ENCODE measurements at regions of chr10 and their contacts with region 1.

Region 1: DNA sequence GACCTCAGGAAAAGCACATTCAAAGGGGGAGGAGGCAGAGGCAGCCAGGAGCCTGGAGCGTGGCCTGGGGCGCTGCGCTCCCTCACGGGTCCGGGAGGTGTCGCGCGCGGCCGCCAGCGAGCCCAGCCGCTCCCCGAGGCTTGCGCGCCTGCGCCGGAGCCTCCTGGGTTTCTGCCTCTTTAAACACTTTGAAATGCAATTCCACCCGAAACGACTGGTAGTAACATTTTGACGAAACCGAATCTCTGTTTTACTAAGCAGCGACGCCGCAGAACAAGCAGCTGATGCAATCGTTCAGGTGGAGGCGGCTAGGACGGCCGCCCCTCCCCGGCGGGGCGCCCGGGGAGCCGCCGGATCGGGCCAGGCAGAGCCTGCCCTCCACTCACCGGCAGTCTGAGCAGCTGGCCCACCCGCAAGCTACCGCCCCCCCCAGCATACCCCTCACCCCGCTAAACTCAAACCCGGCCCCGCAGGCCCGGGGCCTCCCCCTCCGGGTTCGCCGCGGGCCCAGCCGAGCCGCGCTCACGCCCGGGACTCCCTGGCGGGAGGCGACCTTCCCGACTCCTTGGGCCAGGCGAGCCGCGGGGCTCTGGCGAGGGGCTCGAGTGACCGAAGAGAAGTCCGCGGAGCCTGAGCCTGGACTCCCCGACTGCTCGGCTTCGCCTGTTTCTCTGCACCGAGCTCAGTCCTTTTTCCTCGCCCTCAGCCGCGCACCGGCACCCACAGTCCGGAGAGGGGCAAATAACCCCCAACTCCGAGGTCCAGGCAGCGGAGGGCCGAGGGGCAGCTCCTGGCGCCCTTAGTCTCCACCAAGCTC is 3.2 kb downstream of the MKX start:
- DNase-seq: peak; percentile 66
- ATAC-seq: peak; percentile 91
- H3K4me3 Mint-ChIP-seq: peak overlapping the region; percentile 76
- H3K27ac Mint-ChIP-seq: no peak overlapping the region
- H3K4me1 Mint-ChIP-seq: peaks cover 24% of the 10 kb centered on the region
- H3K27me3 Mint-ChIP-seq: peaks cover 60% of the 10 kb centered on the region
- CTCF ChIP-seq: no peak

Region 2: DNA sequence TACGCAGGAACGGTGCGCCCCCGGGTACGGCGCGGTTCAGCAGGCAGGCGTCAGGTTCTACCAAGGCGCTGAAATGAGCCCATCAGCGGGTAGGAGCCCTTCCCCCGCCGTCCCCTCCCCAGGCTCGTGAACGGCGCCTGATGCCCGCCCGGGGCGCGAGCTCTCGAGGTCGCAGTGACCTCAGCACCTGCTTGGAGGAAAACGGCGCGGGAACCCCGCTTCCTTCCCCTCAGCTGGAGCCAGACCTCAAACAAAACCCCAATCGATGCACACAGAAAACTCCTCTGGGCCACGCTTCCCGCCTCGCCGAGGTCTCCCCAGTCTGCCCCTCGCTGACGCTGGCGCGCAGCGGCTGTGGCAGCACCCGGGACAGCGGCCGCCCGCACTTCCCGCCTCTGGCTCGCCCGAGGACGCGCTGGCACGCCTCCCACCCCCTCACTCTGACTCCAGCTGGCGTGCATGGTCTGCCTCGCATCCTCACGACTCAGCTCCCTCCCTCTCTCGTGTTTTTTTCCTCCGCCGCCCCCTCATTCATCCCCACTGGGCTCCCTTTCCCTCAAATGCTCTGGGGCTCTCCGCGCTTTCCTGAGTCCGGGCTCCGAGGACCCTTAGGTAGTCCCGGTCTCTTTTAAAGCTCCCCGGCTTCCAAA is 1526.3 kb before region 1 on chr10:
- CTCF ChIA-PET with region 1: no interaction called
- POLR2A ChIA-PET with region 1: no interaction called
- intact Hi-C with region 1: loop called (anchors 10 kb)
- DNase-seq: no peak
- ATAC-seq: peak; percentile 28
- H3K4me3 Mint-ChIP-seq: peak overlapping the region; percentile 55
- H3K27ac Mint-ChIP-seq: no peak overlapping the region
- H3K4me1 Mint-ChIP-seq: peaks cover 39% of the 10 kb centered on the region
- H3K27me3 Mint-ChIP-seq: peaks cover 71% of the 10 kb centered on the region
- CTCF ChIP-seq: no peak

Region 3: DNA sequence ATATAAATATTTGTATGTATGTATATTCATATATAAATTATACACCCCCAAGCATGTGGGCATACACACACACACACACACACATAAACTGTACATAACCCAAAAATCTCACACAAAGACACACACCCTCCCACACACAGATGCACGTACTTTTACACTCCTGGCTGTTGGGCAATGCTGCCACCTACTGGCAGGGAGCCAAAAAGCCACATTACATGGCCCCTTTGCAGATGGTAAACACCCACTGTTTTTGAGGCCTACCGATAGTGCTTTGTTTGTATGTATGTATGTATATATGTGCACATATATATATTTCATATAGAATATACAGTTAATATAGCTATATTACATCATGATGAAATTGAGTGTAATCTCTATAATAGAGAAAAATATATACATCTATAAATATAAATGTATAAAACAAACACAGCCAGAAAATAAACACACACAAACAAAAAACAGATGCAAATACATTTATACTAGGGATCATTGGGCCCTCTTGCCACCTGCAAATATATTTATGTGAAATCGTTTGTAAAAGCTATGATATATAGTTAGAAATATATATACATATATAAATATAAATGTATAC is 381.7 kb before region 1 on chr10:
- CTCF ChIA-PET with region 1: no interaction called
- POLR2A ChIA-PET with region 1: no interaction called
- intact Hi-C with region 1: loop called (anchors 10 kb)
- DNase-seq: peak; percentile 75
- ATAC-seq: peak; percentile 97
- H3K4me3 Mint-ChIP-seq: no peak overlapping the region
- H3K27ac Mint-ChIP-seq: no peak overlapping the region
- H3K4me1 Mint-ChIP-seq: peaks cover 8% of the 10 kb centered on the region
- H3K27me3 Mint-ChIP-seq: no peaks in the 10 kb centered on the region
- CTCF ChIP-seq: peak; percentile 99

Region 4: DNA sequence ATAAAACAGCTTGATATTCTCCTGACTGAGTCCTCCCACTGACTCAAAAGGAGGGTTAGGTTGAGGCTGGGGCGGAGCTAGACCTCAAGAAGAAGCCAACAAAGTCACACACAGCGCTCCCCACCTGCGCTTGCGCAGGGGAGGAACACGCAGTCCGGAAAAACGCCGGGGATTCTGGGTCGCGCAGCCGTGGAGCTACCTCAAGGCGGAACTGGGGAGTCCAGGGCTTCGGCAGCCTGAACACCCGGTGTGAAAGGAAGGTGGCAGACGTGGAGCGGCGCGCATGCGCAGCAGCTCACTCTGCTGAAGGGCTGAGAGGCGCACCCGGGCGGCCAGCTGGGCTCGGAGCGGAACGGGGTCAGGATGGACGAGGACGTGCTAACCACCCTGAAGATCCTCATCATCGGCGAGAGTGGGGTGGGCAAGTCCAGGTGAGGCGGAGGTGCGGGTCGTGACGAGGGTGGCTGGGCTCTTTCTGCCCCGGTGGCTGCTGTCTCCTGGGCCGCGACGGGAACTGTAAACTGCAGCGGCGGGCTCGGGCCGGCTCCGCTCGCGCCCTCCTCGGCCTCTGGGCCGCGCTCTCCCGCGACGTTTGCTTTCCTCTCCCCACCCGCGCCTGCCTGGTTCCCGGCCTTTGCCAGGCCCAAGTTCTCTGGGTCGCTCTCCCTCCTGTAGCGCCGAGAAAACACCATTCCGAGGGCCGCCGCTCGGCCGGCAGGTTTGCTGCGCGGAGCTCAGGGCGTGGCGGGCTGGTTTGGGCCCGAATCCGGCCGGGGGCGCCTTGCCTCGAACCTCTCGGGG is 238.2 kb before region 1 on chr10 and contains the start of gene RAB18:
- CTCF ChIA-PET with region 1: no interaction called
- POLR2A ChIA-PET with region 1: no interaction called
- intact Hi-C with region 1: loop called (anchors 2 kb)
- DNase-seq: peak; percentile 93
- ATAC-seq: peak; percentile 96
- H3K4me3 Mint-ChIP-seq: peak within 1 kb of the TSS; percentile 100
- H3K27ac Mint-ChIP-seq: peak within 1 kb of the TSS; percentile 99
- H3K4me1 Mint-ChIP-seq: peaks cover 41% of the 10 kb centered on the region
- H3K27me3 Mint-ChIP-seq: no peaks in the 10 kb centered on the region
- CTCF ChIP-seq: no peak
- total RNA-seq, gene RAB18: 48.3 and 55.6 TPM in 2 replicates

Region 5: GRCh38 chr10:28179006-28179742 is 436.8 kb after region 1 on chr10:
- CTCF ChIA-PET with region 1: interaction called, 10 read pairs
- POLR2A ChIA-PET with region 1: no interaction called
- intact Hi-C with region 1: loop called (anchors 1 kb)
- DNase-seq: no peak
- ATAC-seq: peak; percentile 64
- H3K4me3 Mint-ChIP-seq: no peak overlapping the region
- H3K27ac Mint-ChIP-seq: no peak overlapping the region
- H3K4me1 Mint-ChIP-seq: peaks cover 15% of the 10 kb centered on the region
- H3K27me3 Mint-ChIP-seq: no peaks in the 10 kb centered on the region
- CTCF ChIP-seq: peak; percentile 88

Region 6: DNA sequence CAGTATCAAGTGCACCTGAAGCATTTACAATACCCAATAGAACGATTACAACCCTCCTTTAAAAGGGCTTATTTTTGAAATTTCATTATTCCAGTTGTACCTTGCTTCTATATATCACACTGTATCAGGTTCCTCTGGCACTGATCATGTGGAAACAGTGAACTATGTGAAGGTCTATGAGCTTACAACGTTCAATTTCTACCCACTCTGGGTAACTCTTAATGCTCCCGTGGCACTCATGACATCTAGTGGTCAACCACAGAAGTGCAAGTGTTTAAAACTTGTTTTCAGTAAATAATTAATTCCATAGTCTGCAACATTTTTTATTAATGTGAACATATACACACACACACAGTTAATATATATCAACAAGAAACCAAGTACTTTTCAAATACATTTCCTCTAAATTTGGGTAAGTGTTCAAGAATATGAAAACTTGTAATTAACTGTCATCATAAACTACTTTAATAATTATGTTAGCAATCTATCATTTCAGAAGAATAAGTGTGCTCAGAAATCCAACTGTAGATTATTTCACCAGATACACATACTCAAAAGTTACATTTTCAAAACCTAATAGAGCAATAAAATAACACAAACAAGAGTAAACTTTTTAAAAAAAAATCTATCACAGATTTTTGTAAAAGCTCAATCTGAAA is 499.5 kb after region 1 on chr10:
- CTCF ChIA-PET with region 1: interaction called, 11 read pairs
- POLR2A ChIA-PET with region 1: no interaction called
- intact Hi-C with region 1: loop called (anchors 1 kb)
- DNase-seq: no peak
- ATAC-seq: peak; percentile 72
- H3K4me3 Mint-ChIP-seq: no peak overlapping the region
- H3K27ac Mint-ChIP-seq: no peak overlapping the region
- H3K4me1 Mint-ChIP-seq: no peaks in the 10 kb centered on the region
- H3K27me3 Mint-ChIP-seq: peaks cover 13% of the 10 kb centered on the region
- CTCF ChIP-seq: no peak

Measured in activated B cell treated with CpG ODN at 0.5 μM for 24 hours (primary cell).